Activated CD4-positive, alpha-beta memory T cell treated with anti-CD3 and anti-CD28 coated beads for 36 hours (primary cell): ENCODE measurements at regions of chr3 and their contacts with region 1.

Region 1: GRCh38 chr3:187112934-187113793 is 26.1 kb downstream of the RPL39L start:
- DNase-seq: no peak
- H3K4me3 Mint-ChIP-seq: no peak overlapping the region
- H3K27ac Mint-ChIP-seq: peak overlapping the region; percentile 44
- H3K4me1 Mint-ChIP-seq: peaks cover 7% of the 10 kb centered on the region
- H3K27me3 Mint-ChIP-seq: no peaks in the 10 kb centered on the region

Region 2: GRCh38 chr3:187101184-187102072 is 11.7 kb before region 1 on chr3:
- CTCF ChIA-PET with region 1: interaction called, 43 read pairs
- POLR2A ChIA-PET with region 1: interaction called, 3 read pairs
- intact Hi-C with region 1: no loop called
- DNase-seq: peak; percentile 68
- H3K4me3 Mint-ChIP-seq: peak overlapping the region; percentile 20
- H3K27ac Mint-ChIP-seq: peak overlapping the region; percentile 28
- H3K4me1 Mint-ChIP-seq: peaks cover 30% of the 10 kb centered on the region
- H3K27me3 Mint-ChIP-seq: no peaks in the 10 kb centered on the region

Region 3: DNA sequence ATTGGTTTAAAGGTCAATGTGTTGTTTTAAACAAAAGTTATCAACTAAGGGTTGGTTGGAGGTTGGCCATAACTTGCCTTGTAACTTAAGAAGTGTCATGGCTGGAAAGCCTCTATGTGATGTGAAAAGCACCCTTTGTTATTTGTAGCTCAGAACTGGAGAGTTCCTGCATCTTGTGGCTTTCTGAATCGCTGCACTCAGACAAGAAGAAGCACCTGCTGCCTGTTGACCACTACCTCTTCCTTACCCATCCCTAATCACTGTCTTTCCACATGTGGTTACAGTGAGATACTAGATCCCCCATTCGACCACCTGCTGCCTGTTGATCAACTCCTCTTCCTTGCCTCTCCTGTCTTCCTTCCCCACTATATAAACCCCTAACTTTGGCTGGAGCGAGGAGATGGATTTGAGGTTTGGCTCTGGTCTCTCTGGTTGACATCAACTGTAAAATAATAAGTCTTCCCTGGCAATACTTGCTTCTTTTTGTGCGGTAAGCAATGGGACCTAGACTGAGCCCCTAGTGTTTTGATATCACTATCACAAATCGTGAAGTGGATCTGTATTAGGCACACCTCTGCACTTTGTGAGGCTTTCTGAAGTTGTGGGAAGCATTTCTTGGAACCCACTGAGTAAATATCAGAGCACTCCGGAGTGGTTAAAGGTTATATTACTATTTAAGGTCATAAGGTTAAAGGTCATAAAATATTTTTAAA is 12.3 kb after region 1 on chr3:
- CTCF ChIA-PET with region 1: interaction called, 23 read pairs
- POLR2A ChIA-PET with region 1: no interaction called
- intact Hi-C with region 1: no loop called
- DNase-seq: no peak
- H3K4me3 Mint-ChIP-seq: no peak overlapping the region
- H3K27ac Mint-ChIP-seq: no peak overlapping the region
- H3K4me1 Mint-ChIP-seq: peaks cover 17% of the 10 kb centered on the region
- H3K27me3 Mint-ChIP-seq: no peaks in the 10 kb centered on the region

Region 4: DNA sequence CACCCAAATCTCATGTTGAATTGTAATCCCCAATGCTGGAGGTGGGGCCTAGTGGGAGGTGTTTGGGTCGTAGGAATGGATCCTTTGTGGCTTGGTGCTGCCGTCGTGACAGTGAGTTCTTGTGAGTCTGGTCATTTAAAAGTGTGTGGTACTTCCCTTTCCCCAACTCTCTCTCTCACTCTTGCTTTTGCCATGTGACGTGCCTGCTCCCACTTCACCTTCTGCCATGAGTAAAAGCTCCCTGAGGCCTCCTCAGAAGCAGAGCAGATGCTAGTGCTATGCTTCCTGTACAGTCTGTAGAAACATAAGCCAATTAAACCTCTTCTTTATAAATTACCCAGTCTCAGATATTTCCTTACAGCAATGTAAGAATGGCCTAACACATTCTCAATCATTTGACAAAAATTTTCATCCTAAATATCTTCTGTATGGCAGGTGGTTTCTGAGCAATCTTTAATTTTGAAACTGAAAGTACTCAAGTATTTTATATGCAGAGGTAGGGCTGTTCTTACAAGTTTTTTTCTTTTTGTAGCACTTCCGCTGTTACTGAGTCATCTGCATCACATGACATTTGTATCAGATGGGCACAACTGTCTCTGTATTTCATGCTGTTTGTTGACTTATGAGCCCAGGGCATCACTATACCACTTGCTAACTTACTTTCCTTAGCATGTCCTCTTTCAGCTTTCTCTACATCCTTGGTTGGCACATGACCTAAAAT is 17.3 kb after region 1 on chr3:
- CTCF ChIA-PET with region 1: interaction called, 23 read pairs
- POLR2A ChIA-PET with region 1: no interaction called
- intact Hi-C with region 1: no loop called
- DNase-seq: peak; percentile 71
- H3K4me3 Mint-ChIP-seq: peak overlapping the region; percentile 50
- H3K27ac Mint-ChIP-seq: peak overlapping the region; percentile 96
- H3K4me1 Mint-ChIP-seq: peaks cover 34% of the 10 kb centered on the region
- H3K27me3 Mint-ChIP-seq: no peaks in the 10 kb centered on the region

Region 5: DNA sequence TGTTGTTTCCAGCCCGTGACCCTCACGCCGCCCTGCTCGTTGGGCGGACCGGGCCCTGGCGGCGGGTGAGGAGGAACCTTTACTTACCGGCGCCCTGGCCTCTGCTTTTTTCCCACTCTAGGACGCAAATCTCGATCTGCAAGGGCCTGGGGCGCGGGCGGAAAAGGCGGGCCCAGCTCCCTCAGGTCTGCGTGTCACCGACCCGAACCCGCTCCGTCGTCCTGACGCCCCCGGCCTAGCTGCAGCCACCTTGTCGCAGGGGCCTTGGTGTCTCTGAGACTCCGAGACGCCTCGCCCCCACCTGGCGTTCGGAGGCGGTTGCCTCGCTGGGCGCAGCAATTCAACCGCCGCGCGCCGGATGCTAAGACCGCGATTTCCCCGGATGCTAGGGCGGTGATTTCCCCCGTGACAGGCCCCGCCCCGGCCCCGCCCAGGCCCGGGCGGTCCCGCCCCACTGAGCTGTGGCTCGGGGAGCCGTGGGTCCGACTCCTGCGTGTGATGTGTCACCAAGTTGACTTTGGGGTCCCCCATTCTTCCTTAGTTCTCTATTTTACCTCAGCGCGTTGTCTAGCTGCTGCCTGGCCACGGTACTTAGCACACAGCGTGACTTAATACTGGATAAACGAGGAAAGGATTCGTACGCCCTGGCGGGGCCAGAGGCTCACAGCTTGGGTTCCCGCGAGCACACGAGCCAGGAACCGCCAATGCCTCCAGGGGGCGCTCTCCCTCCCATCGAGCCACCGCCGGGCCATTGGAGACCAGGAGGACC is 26.1 kb after region 1 on chr3 and contains the start of gene RPL39L:
- CTCF ChIA-PET with region 1: interaction called, 58 read pairs
- POLR2A ChIA-PET with region 1: interaction called, 4 read pairs
- intact Hi-C with region 1: loop called (anchors 1 kb)
- DNase-seq: peak; percentile 96
- H3K4me3 Mint-ChIP-seq: peak within 1 kb of the TSS; percentile 91
- H3K27ac Mint-ChIP-seq: peak within 1 kb of the TSS; percentile 93
- H3K4me1 Mint-ChIP-seq: peaks cover 22% of the 10 kb centered on the region
- H3K27me3 Mint-ChIP-seq: no peaks in the 10 kb centered on the region
- total RNA-seq, gene RPL39L: 22.5 to 25.2 TPM

Region 6: DNA sequence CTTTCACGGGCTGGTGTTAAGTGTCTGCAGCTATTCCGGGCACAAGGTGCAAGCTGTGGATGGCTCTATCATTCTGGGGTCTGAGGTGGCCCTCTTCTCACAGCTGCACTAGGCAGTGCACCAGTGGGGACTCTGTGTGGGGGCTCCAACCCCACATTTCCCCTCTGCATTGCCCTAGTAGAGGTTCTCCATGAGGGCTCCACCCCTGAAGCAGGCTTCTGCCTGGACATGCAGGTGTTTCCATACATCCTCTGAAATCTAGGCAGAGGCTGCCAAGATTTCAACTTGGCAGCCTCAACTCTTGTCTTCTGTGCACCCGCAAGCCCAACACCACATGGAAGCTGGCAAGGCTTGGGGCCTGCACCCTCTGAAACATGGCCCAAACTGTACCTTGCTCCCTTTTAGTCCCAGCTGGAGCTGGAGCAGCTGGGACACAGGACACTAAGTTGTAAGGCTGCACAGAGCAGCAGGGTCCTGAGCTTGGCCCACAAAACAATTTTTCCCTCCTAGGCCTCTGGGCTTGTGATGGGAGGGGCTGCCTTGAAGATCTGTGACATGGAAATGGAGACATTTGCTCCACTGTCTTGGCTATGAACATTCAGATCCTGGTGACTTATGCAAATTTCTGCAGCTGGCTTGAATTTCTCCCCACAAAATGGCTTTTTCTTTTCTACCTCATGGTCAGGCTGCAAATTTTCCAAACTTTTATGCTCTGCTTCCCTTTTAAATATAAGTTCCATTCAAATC is 32.2 kb after region 1 on chr3:
- CTCF ChIA-PET with region 1: interaction called, 174 read pairs
- POLR2A ChIA-PET with region 1: no interaction called
- intact Hi-C with region 1: loop called (anchors 1 kb)
- DNase-seq: no peak
- H3K4me3 Mint-ChIP-seq: no peak overlapping the region
- H3K27ac Mint-ChIP-seq: no peak overlapping the region
- H3K4me1 Mint-ChIP-seq: no peaks in the 10 kb centered on the region
- H3K27me3 Mint-ChIP-seq: no peaks in the 10 kb centered on the region

Region 7: DNA sequence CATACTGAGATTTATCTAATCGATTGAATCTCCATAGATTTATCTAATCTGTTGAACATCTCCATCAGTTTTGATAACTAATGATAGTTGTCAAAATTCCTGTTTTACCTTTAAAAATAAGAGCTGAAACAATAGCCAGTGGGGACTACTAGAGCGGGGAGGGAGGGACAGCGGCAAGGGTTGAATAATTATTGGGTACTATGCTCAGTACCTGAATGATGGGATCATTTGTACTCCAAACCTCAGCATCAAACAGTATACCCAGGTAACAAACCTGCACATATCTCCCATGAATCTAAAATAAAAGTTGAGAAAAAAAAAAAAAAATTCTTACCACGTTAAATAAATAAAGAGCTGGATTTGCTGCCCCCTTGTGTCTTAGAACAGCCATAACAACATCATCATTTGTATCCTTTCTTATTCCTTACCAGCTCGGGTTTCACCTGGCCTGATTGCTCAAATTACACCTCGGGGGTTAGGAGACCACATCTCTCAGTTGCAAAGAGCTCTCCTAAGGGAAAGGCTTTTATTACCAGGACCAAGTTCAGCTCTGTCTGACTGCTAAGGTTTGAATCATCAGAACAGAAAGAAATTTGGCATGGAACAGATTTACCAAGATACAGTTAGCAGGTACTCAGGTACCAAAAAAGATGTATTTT is 51.9 kb after region 1 on chr3:
- CTCF ChIA-PET with region 1: interaction called, 177 read pairs
- POLR2A ChIA-PET with region 1: no interaction called
- intact Hi-C with region 1: loop called (anchors 1 kb)
- DNase-seq: peak; percentile 20
- H3K4me3 Mint-ChIP-seq: no peak overlapping the region
- H3K27ac Mint-ChIP-seq: no peak overlapping the region
- H3K4me1 Mint-ChIP-seq: peaks cover 1% of the 10 kb centered on the region
- H3K27me3 Mint-ChIP-seq: peaks cover 3% of the 10 kb centered on the region